Calu3 (cell line): ENCODE measurements at regions of chr6 and their contacts with region 1.

Region 1: GRCh38 chr6:151300267-151300991 is 60.7 kb downstream of the AKAP12 start:
- DNase-seq: no peak
- H3K4me3 Mint-ChIP-seq: no peak overlapping the region
- H3K27ac Mint-ChIP-seq: no peak overlapping the region
- H3K4me1 Mint-ChIP-seq: no peaks in the 10 kb centered on the region
- H3K27me3 Mint-ChIP-seq: no peaks in the 10 kb centered on the region
- CTCF ChIP-seq: no peak

Region 2: DNA sequence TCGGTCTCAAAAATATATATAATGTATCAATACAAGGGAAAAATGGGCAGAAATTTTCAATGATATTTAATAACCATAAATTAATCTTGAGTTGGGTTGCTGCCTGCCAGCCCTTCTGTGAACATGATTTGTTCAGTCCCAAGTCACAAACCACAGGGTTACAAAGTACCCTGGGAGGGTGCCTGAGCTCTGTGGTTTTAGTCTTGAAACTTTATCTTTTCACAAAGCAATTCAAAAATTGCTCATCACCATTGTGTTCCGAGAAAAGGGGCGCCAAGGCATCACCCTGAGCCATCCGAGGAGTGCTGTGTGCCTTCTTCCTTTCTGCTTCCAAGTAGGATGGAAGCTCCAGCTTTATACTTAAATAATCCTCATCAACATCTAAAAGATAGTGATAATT is 202.3 kb before region 1 on chr6:
- CTCF ChIA-PET with region 1: interaction called, 10 read pairs
- intact Hi-C with region 1: no loop called
- DNase-seq: no peak
- H3K4me3 Mint-ChIP-seq: no peak overlapping the region
- H3K27ac Mint-ChIP-seq: no peak overlapping the region
- H3K4me1 Mint-ChIP-seq: no peaks in the 10 kb centered on the region
- H3K27me3 Mint-ChIP-seq: no peaks in the 10 kb centered on the region
- CTCF ChIP-seq: no peak

Region 3: GRCh38 chr6:151257985-151258445 is 42.4 kb before region 1 on chr6:
- CTCF ChIA-PET with region 1: no interaction called
- intact Hi-C with region 1: no loop called
- DNase-seq: no peak
- H3K4me3 Mint-ChIP-seq: no peak overlapping the region
- H3K27ac Mint-ChIP-seq: no peak overlapping the region
- H3K4me1 Mint-ChIP-seq: peaks cover 10% of the 10 kb centered on the region
- H3K27me3 Mint-ChIP-seq: no peaks in the 10 kb centered on the region
- CTCF ChIP-seq: no peak